ENCODE measurements at regions of chr11 and their contacts with region 1.

Region 1: DNA sequence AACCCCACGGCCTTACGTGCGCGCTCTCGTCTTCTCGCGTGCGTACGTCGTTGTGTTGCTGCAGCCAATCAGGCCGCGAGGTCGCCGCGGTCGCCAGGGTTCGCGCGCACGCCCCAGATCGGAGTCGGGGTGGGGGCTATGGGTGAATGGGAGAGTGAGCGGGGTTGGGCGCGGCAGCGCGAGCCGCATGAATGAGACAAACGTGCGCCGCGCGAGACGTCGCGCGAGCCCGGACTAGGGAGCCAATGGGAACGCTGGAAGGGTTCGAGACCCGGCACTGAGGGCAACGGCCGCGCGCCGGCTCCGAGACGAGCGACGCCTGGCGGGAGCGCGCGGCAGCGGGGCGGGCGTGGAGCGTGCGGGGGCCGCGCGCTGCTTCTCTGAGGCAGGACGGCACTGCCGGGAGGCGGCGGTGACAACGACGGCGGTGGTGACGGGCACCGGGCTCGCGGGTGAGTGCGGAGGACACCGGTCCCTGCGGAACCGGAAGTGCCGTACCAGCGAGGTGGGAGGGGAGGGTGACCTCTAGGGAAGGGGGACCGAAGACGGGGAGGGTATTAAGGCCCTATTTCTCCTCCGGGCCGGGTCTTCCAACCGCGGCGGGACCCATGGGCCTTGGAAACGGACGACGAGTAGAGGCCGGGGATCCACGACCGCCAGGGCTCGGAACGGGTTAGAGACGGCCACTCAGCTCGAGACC is at the start of gene ZDHHC5:
- DNase-seq: peak; percentile 99 to 100 (median 100)
- ATAC-seq: peak; percentile 94 to 97 (median 96)
- H3K4me3 ChIP-seq: peak within 1 kb of the TSS; percentile 76 to 99 (median 88)
- H3K27ac ChIP-seq: peak within 1 kb of the TSS; percentile 96 to 100 (median 98)
- H3K4me1 ChIP-seq: peaks cover 7 to 42% (median 20%) of the 10 kb centered on the region in 12 donors
- H3K27me3 ChIP-seq: no peaks in the 10 kb centered on the region
- CTCF ChIP-seq: peak; percentile 27 to 80 (median 56)
- POLR2A ChIP-seq: peak; percentile 3 to 84
- total RNA-seq, gene ZDHHC5: 32.5 to 63.6 (median 45.7) TPM

Region 2: GRCh38 chr11:57237204-57237681 is 430.6 kb before region 1 on chr11 and contains the start of gene APLNR:
- intact Hi-C with region 1: no loop called
- DNase-seq: no peak
- ATAC-seq: peak in 3 of 4 donors; percentile 44 to 74 (median 55)
- H3K4me3 ChIP-seq: peak within 1 kb of the TSS; percentile 14 to 74 (median 49)
- H3K27ac ChIP-seq: peak within 1 kb of the TSS; percentile 15 to 80 (median 65)
- H3K4me1 ChIP-seq: peaks cover 0 to 47% (median 14%) of the 10 kb centered on the region in 12 donors
- H3K27me3 ChIP-seq: peaks cover 0 to 36% (median 0%) of the 10 kb centered on the region in 9 donors
- CTCF ChIP-seq: no peak
- POLR2A ChIP-seq: no peak
- total RNA-seq, gene APLNR: 5.7 to 63.3 (median 9.9) TPM

Region 3: GRCh38 chr11:57657194-57658022 is 10.5 kb before region 1 on chr11 and contains the start of gene CLP1:
- intact Hi-C with region 1: loop called in 2 of 10 experiments (anchors 1 kb)
- DNase-seq: peak; percentile 99 to 100 (median 100)
- ATAC-seq: peak; percentile 99
- H3K4me3 ChIP-seq: peak within 1 kb of the TSS; percentile 28 to 92 (median 70)
- H3K27ac ChIP-seq: peak within 1 kb of the TSS; percentile 52 to 96 (median 87)
- H3K4me1 ChIP-seq: peaks cover 0 to 28% (median 15%) of the 10 kb centered on the region in 12 donors
- H3K27me3 ChIP-seq: no peaks in the 10 kb centered on the region
- CTCF ChIP-seq: peak in 1 of 12 donors; percentile 11
- POLR2A ChIP-seq: peak in 1 of 2 donors; percentile 80
- total RNA-seq, gene CLP1: 5.5 to 11.6 (median 8.2) TPM

Region 4: DNA sequence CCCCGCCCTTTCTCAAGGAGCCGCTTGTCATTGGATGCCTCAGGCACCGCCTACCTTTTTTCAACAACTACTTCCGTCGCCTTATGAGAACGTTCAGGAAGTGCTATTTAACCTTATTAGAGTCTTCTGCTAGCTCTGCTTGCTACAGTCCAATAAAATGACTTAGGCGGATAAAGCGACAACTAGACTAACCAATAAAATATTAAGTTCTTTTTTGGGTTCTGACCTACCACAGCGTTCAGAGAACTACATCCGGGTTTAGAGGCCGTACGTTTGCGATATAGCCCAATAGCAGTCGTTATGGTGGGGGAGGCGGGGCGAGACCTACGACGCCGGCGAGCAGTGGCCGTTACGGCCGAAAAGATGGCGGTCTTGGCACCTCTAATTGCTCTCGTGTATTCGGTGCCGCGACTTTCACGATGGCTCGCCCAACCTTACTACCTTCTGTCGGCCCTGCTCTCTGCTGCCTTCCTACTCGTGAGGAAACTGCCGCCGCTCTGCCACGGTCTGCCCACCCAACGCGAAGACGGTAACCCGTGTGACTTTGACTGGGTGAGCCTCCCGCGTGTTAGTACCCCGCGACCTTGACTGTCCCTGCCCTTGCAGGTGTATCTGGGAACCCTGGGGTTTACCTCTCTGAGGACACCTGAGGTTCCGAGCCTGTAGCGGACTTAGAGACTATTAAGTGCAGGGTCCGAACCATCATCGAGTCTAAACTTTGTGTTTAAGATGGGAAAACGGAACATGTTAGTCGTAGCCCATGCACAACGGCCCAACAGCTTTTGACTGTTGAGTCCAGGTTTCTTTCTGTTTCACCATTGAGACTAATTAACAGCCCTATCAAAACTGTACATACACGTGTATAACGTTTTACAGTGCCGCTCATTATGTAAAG is 44.6 kb after region 1 on chr11 and contains the start of gene TMX2:
- intact Hi-C with region 1: loop called in 3 of 10 experiments (anchors 2 to 5 kb)
- DNase-seq: peak; percentile 92 to 96 (median 94)
- ATAC-seq: peak; percentile 97 to 98 (median 97)
- H3K4me3 ChIP-seq: peak within 1 kb of the TSS; percentile 68 to 100 (median 90)
- H3K27ac ChIP-seq: peak within 1 kb of the TSS; percentile 73 to 95 (median 91)
- H3K4me1 ChIP-seq: peaks cover 0 to 47% (median 31%) of the 10 kb centered on the region in 12 donors
- H3K27me3 ChIP-seq: no peaks in the 10 kb centered on the region
- CTCF ChIP-seq: no peak
- POLR2A ChIP-seq: no peak
- total RNA-seq, gene TMX2: 46.7 to 78.2 (median 65.8) TPM

Region 5: DNA sequence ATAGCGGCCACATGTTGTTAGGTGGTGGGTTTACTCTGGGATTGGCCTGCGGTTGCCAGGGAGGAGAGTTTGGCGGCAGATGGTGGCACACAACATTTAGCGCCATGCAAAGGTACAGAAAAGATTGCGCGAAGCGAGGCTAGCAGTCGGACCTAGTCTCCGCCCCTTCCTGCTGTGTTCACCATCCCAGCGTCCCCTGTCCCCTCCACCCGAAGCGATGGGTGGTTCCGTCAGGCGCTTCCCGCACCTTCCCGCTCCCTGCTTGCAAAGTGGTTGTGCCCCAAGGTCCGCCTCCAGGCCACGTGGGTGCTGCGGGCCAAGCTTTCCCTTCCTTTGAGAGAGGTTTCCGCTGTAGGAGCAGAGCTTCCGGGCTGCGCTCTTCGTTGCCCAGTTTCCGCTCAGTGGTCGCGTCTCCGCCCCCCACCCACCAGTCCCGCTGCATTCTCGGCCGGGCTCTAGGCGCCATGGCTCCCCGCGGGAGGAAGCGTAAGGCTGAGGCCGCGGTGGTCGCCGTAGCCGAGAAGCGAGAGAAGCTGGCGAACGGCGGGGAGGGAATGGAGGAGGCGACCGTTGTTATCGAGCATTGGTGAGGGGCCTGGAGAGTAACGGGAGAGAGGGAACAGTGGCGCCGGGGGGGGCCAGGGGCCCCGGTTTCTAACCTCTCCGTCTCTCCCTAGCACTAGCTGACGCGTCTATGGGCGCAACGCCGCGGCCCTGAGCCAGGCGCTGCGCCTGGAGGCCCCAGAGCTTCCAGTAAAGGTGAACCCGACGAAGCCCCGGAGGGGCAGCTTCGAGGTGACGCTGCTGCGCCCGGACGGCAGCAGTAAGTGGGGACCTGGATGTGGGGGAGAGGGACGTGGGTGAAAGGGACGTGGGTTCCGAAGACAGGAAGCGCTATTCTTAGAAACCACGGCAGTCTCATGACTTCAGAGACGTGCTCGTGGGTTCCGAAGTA is 73.5 kb after region 1 on chr11 and contains the start of gene SELENOH:
- intact Hi-C with region 1: loop called in 4 of 10 experiments (anchors 2 to 10 kb)
- DNase-seq: peak; percentile 95 to 98 (median 97)
- ATAC-seq: peak; percentile 96 to 98 (median 98)
- H3K4me3 ChIP-seq: peak within 1 kb of the TSS; percentile 78 to 99 (median 92)
- H3K27ac ChIP-seq: peak within 1 kb of the TSS; percentile 92 to 99 (median 96)
- H3K4me1 ChIP-seq: peaks cover 2 to 42% (median 14%) of the 10 kb centered on the region in 12 donors
- H3K27me3 ChIP-seq: no peaks in the 10 kb centered on the region
- CTCF ChIP-seq: peak in 1 of 12 donors; percentile 4
- POLR2A ChIP-seq: peak in 1 of 2 donors; percentile 73
- total RNA-seq, gene SELENOH: 56.8 to 134 (median 85.7) TPM

Measured in heart left ventricle (tissue), 16 donors.